ENCODE measurements at regions of chr9 and their contacts with region 1.

Region 1: GRCh38 chr9:105150991-105151685 is 93.3 kb upstream of the SLC44A1 start:
- DNase-seq: peak; percentile 68
- ATAC-seq: peak; percentile 71
- H3K4me3 ChIP-seq: no peak overlapping the region
- H3K27ac ChIP-seq: no peak overlapping the region
- H3K4me1 ChIP-seq: peaks cover 17% of the 10 kb centered on the region
- H3K27me3 ChIP-seq: no peaks in the 10 kb centered on the region
- CTCF ChIP-seq: no peak

Region 2: GRCh38 chr9:105053209-105053652 is 97.9 kb before region 1 on chr9:
- CTCF ChIA-PET with region 1: no interaction called
- POLR2A ChIA-PET with region 1: no interaction called
- intact Hi-C with region 1: loop called (anchors 5 kb)
- DNase-seq: peak; percentile 37
- ATAC-seq: no peak
- H3K4me3 ChIP-seq: no peak overlapping the region
- H3K27ac ChIP-seq: no peak overlapping the region
- H3K4me1 ChIP-seq: peaks cover 21% of the 10 kb centered on the region
- H3K27me3 ChIP-seq: no peaks in the 10 kb centered on the region
- CTCF ChIP-seq: no peak

Region 3: DNA sequence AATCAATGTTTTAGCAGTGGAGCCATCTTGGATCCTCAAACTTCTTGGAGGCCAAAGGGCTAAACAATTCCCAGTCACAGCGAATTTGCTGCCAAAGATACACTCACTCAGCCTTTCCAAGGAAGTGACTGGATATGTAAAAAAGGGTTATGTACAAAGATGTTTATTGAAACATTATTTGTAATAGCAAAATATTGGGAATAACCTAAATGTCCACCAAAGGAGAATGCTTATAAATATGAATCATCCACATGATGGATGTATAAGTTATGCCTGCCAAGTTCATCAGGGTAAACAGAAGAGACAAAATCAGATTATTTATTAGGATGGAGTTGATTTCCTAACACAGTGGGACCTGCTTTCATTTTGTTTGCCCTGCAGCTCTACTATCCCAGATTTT is 78.0 kb before region 1 on chr9:
- CTCF ChIA-PET with region 1: no interaction called
- POLR2A ChIA-PET with region 1: no interaction called
- intact Hi-C with region 1: no loop called
- DNase-seq: peak; percentile 70
- ATAC-seq: peak; percentile 33
- H3K4me3 ChIP-seq: no peak overlapping the region
- H3K27ac ChIP-seq: peak overlapping the region; percentile 85
- H3K4me1 ChIP-seq: peaks cover 43% of the 10 kb centered on the region
- H3K27me3 ChIP-seq: no peaks in the 10 kb centered on the region
- CTCF ChIP-seq: no peak

Region 4: GRCh38 chr9:105385381-105385985 is 234.3 kb after region 1 on chr9:
- CTCF ChIA-PET with region 1: no interaction called
- POLR2A ChIA-PET with region 1: no interaction called
- intact Hi-C with region 1: no loop called
- DNase-seq: no peak
- ATAC-seq: no peak
- H3K4me3 ChIP-seq: no peak overlapping the region
- H3K27ac ChIP-seq: no peak overlapping the region
- H3K4me1 ChIP-seq: no peaks in the 10 kb centered on the region
- H3K27me3 ChIP-seq: no peaks in the 10 kb centered on the region
- CTCF ChIP-seq: no peak

Measured in PC-3 (cell line).